ENCODE measurements at regions of chr4 and their contacts with region 1.

Region 1: DNA sequence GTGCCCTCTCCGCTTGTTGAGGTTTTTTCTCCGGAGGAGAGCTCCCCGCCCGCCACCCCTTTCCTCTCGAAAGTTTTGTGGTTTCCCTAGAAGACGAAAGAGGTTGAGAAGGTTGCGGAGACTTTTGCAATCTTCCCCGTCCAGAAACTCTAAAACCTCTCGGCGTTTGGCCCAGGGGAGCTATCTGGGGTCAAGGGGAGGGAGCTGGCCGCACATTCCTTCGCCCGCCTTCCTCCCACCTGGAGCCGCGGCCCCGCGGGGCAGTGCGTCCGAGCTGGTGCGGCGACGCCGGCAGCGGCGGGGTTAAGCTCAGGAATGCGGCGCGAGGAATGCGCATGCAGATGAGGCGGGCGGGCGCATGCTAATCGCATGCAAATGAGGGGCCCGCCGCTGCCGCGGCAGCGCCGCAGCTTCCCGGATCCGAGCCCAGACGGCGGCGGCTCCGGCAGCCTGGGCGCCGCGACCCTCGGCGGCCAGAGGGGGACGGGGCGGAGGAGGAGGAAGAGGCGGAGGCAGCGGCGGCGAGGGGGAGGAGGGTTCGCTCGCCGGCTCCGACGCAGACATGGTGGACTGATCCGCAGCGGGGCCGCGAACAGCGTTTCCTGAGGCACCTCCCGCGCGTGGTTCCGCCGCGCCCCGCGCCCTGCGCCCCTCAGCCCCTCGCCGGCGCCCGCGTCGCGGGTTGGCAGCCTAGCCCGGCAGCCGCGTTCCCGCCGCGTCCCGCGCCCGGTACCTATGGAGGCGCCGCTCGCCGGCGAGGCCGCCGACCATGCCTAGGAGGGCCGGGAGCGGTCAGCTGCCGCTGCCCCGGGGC is at the start of gene WWC2:
- DNase-seq: peak; percentile 83
- ATAC-seq: peak; percentile 82
- H3K4me3 ChIP-seq: peak within 1 kb of the TSS; percentile 90 to 97 (median 91)
- H3K27ac ChIP-seq: peak within 1 kb of the TSS; percentile 99
- H3K4me1 ChIP-seq: peaks cover 68% of the 10 kb centered on the region
- H3K27me3 ChIP-seq: no peaks in the 10 kb centered on the region; a peak in 1 of 5 replicates
- CTCF ChIP-seq: no peak; the same call in 1 of the 2 replicates
- EP300 ChIP-seq: peak; percentile 45 to 52; a peak in 1 of 4 replicates
- POLR2A ChIP-seq: peak in 1 of 2 experiments; percentile 56; a peak in 2 of 4 replicates
- RAD21 ChIP-seq: peak; percentile 62
- total RNA-seq, gene WWC2: 40.0 and 44.6 TPM in 2 replicates

Region 2: GRCh38 chr4:183080372-183081115 is 18.4 kb before region 1 on chr4:
- CTCF ChIA-PET with region 1: no interaction called
- POLR2A ChIA-PET with region 1: interaction called, 78 read pairs
- in situ Hi-C with region 1: no loop called
- intact Hi-C with region 1: loop called (anchors 2 kb)
- DNase-seq: peak; percentile 93
- ATAC-seq: peak; percentile 90
- H3K4me3 ChIP-seq: peak overlapping the region in 2 of 3 experiments; percentile 27 to 48; a peak in 4 of 6 replicates
- H3K27ac ChIP-seq: peak overlapping the region; percentile 96
- H3K4me1 ChIP-seq: peaks cover 79% of the 10 kb centered on the region
- H3K27me3 ChIP-seq: no peaks in the 10 kb centered on the region
- CTCF ChIP-seq: no peak
- EP300 ChIP-seq: peak in 1 of 2 experiments; percentile 97; a peak in 3 of 4 replicates
- POLR2A ChIP-seq: no peak
- RAD21 ChIP-seq: 0 out of 2 replicates have a peak, but pooled peaks have one; percentile 5

Region 3: DNA sequence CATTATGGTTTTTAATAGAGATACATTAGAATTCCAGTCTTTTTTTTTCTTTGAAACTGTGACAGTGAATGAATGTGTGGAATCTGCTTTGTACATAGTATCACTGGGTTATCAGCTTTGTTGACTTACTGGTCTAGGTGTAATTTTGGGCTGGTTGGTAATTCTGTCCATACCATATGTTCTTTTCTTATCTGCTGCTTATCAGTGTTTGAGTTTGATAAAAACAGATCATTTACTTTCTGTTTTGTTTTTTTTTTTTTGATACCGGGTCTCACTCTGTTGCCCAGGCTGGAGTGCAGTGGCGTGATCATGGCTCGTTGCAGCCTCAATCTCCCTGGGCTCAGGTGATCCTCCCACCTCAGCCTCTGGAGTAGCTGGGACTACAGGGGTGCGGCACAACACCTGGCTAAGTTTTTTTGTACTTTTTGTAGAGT is 12.5 kb after region 1 on chr4:
- CTCF ChIA-PET with region 1: no interaction called
- POLR2A ChIA-PET with region 1: interaction called, 23 read pairs
- in situ Hi-C with region 1: no loop called
- intact Hi-C with region 1: loop called (anchors 1 kb)
- DNase-seq: peak; percentile 81
- ATAC-seq: peak; percentile 76
- H3K4me3 ChIP-seq: peak overlapping the region; percentile 19 to 56 (median 36); a peak in 4 of 6 replicates
- H3K27ac ChIP-seq: peak overlapping the region; percentile 88
- H3K4me1 ChIP-seq: peaks cover 98% of the 10 kb centered on the region
- H3K27me3 ChIP-seq: no peaks in the 10 kb centered on the region
- CTCF ChIP-seq: no peak
- EP300 ChIP-seq: peak in 1 of 2 experiments; percentile 76; a peak in 2 of 4 replicates
- POLR2A ChIP-seq: no peak
- RAD21 ChIP-seq: no peak

Region 4: GRCh38 chr4:183140911-183141320 is 42.0 kb after region 1 on chr4:
- CTCF ChIA-PET with region 1: no interaction called
- POLR2A ChIA-PET with region 1: interaction called, 5 read pairs
- in situ Hi-C with region 1: no loop called
- intact Hi-C with region 1: loop called (anchors 2 kb)
- DNase-seq: no peak
- ATAC-seq: no peak
- H3K4me3 ChIP-seq: no peak overlapping the region
- H3K27ac ChIP-seq: peak overlapping the region; percentile 44
- H3K4me1 ChIP-seq: peaks cover 77% of the 10 kb centered on the region
- H3K27me3 ChIP-seq: no peaks in the 10 kb centered on the region
- CTCF ChIP-seq: no peak
- EP300 ChIP-seq: no peak
- POLR2A ChIP-seq: no peak
- RAD21 ChIP-seq: no peak

Region 5: DNA sequence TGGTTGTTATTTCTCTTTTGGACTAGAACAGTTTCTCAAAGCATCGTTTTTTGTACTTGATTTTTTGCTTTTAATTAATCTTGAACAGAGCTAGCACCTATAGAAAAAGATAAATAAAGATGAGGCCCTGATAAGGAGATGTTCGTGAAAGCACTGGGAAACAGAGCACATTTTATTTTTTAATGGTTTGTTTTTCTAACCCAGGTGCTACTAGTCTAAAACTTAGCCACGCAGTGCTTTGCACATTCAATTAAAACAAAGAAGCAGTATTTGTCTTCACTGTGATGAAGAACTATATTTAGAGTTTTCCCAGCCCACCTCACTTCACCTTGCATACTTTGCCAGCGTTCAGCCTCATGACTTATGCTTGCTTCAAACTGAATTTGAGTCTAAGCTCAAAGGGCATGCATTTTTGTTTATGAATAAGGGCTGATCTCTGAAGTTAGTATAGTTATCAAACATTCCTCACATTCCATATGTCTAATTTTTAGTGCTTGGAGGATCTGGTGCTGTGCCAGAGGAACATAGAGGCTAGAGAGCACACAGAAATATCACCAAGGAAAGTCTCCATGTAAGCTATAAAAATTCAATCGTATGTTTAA is 76.8 kb after region 1 on chr4:
- CTCF ChIA-PET with region 1: no interaction called
- POLR2A ChIA-PET with region 1: interaction called, 11 read pairs
- in situ Hi-C with region 1: loop called (anchors 5 kb)
- intact Hi-C with region 1: loop called (anchors 5 kb)
- DNase-seq: peak; percentile 89
- ATAC-seq: peak; percentile 73
- H3K4me3 ChIP-seq: no peak overlapping the region; a peak in 1 of 6 replicates
- H3K27ac ChIP-seq: peak overlapping the region; percentile 64
- H3K4me1 ChIP-seq: peaks cover 63% of the 10 kb centered on the region
- H3K27me3 ChIP-seq: no peaks in the 10 kb centered on the region
- CTCF ChIP-seq: no peak
- EP300 ChIP-seq: 0 out of 4 replicates have a peak, but pooled peaks of 1 of the 2 experiments have one; percentile 26
- POLR2A ChIP-seq: no peak
- RAD21 ChIP-seq: no peak

Region 6: GRCh38 chr4:183182873-183183725 is 84.2 kb after region 1 on chr4:
- CTCF ChIA-PET with region 1: no interaction called
- POLR2A ChIA-PET with region 1: interaction called, 13 read pairs
- in situ Hi-C with region 1: no loop called
- intact Hi-C with region 1: no loop called
- DNase-seq: peak; percentile 86
- ATAC-seq: peak; percentile 95
- H3K4me3 ChIP-seq: no peak overlapping the region
- H3K27ac ChIP-seq: peak overlapping the region; percentile 29
- H3K4me1 ChIP-seq: peaks cover 36% of the 10 kb centered on the region
- H3K27me3 ChIP-seq: no peaks in the 10 kb centered on the region; a peak in 1 of 5 replicates
- CTCF ChIP-seq: no peak
- EP300 ChIP-seq: peak in 1 of 2 experiments; percentile 64; a peak in 2 of 4 replicates
- POLR2A ChIP-seq: no peak
- RAD21 ChIP-seq: no peak